Activated CD4-positive, alpha-beta T cell treated with anti-CD3 and anti-CD28 coated beads, Interleukin-2, amount 10 ng/mL, durations not matched to agents 24 days and 14 days (primary cell): ENCODE measurements at regions of chr12 and their contacts with region 1.

Region 1: DNA sequence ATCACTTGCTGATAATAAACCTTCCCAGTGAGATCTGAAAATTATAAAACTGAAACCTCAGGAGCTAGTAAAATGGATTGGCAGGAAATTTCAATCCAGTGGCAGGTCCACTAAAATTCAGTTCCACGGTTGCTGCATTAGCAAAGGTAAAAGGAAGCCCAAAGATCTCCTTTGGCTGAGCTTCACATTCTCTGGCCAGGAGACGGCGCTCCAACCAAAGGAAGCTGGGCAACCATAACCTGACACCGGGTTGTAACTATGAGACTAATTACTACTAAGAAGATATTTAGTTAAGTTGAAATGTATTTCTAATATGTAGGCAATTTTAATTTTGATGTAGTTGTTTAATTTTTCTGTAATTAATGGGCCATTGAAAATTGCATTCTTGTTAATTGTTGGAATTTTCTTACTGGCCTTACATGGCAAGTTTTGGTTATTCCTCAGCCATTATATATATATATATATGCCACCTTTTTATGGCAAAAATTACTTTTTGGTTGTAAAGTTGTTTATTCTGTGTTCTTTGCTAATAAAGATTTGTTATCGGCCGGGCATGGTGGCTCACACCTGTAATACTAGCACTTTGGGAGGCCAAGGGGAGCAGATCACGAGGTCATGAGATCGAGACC is 17.0 kb downstream of the OR8S1 start:
- DNase-seq: peak; percentile 80
- H3K4me3 Mint-ChIP-seq: no peak overlapping the region
- H3K27ac Mint-ChIP-seq: no peak overlapping the region
- H3K4me1 Mint-ChIP-seq: peaks cover 3% of the 10 kb centered on the region
- H3K27me3 Mint-ChIP-seq: peaks cover 11% of the 10 kb centered on the region

Region 2: DNA sequence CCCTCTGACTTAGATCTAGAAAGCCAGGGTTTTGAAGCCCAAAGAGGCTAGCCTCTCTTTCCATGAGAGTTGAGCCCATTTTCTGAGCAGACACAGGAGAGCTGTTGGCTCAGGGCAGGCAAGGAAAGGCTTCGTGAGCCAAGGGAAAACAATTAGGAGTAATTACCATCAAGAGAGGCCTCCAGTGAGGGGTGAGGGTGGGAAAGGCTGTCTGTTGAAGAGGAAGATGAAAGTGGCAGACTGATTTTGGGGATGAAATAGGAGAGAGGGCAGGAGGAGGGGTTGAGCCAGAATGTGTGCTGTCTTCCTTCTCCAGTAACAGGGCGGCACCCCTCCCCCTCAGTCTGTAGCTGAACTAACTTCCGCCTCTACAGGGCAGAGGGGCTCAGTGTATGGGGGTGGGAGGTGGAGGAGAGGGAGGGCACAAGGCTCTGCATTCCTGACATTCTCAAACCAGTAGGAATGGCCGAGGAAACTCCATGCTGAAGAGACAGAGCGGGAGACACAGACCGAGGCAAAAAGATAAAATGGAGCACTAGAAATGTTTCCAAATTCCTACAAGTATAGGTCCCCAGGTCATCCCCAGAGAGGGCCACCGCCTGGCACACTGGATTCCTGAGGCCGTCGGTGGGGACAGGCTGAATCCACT is 505.0 kb before region 1 on chr12:
- intact Hi-C with region 1: no loop called
- DNase-seq: no peak
- H3K4me3 Mint-ChIP-seq: no peak overlapping the region
- H3K27ac Mint-ChIP-seq: no peak overlapping the region
- H3K4me1 Mint-ChIP-seq: peaks cover 5% of the 10 kb centered on the region
- H3K27me3 Mint-ChIP-seq: no peaks in the 10 kb centered on the region

Region 3: GRCh38 chr12:48508991-48509390 is 33.4 kb before region 1 on chr12:
- intact Hi-C with region 1: no loop called
- DNase-seq: no peak
- H3K4me3 Mint-ChIP-seq: no peak overlapping the region
- H3K27ac Mint-ChIP-seq: no peak overlapping the region
- H3K4me1 Mint-ChIP-seq: no peaks in the 10 kb centered on the region
- H3K27me3 Mint-ChIP-seq: peaks cover 4% of the 10 kb centered on the region

Region 4: DNA sequence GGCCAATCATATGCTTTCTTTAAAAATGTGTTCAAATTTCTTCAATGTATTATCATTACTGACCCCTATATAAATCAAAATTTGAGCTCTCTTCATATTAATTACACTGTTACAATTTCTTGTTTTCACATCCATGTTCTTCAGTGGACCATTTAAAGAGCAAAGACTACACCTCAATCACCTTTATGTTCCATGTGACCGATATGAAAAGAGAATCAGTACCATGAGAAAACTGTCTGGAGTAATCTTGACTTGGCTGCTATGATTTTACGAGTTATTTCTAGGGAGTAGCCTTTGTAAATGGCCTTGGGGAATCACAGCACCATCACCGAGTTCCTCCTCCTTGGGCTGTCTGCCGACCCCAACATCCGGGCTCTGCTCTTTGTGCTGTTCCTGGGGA is 17.1 kb before region 1 on chr12 and contains the start of gene OR8S1:
- intact Hi-C with region 1: no loop called
- DNase-seq: no peak
- H3K4me3 Mint-ChIP-seq: no peak within 1 kb of the TSS
- H3K27ac Mint-ChIP-seq: no peak within 1 kb of the TSS
- H3K4me1 Mint-ChIP-seq: no peaks in the 10 kb centered on the region
- H3K27me3 Mint-ChIP-seq: no peaks in the 10 kb centered on the region
- total RNA-seq, gene OR8S1: not detected in 2 replicates

Region 5: DNA sequence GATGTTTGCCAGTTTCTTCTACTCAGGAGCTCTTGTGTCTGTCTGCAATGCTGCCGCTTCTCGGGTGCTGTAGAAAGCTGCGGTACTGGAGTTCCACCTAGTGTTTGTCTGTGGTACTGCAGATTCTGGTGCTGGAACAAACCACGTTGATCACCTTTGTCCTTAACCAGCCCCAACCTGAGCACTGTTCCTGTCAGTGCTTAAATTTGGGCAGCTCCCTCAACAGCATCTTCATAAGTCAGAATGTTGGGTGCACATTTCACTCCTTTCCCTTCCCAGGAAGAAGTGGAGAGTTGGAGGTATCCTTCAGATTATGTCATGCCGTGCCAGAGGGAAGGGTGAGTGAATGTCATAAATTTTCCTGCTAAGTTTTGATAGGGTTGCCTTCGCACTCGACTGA is 76.1 kb after region 1 on chr12:
- intact Hi-C with region 1: loop called (anchors 1 kb)
- DNase-seq: peak; percentile 93
- H3K4me3 Mint-ChIP-seq: no peak overlapping the region
- H3K27ac Mint-ChIP-seq: no peak overlapping the region
- H3K4me1 Mint-ChIP-seq: peaks cover 3% of the 10 kb centered on the region
- H3K27me3 Mint-ChIP-seq: peaks cover 26% of the 10 kb centered on the region